Dorsolateral prefrontal cortex (tissue), 120 donors: ENCODE measurements at regions of chr17 and their contacts with region 1.

Region 1: GRCh38 chr17:76709077-76709950 is 1.5 kb downstream of the MXRA7 start:
- DNase-seq: peak in 5 of 10 donors; percentile 30 to 66 (median 59)
- H3K4me3 ChIP-seq: peak overlapping the region; percentile 50 to 81 (median 69)
- H3K27ac ChIP-seq: peak overlapping the region; percentile 43 to 92 (median 86)
- H3K27me3 ChIP-seq: no peaks in the 10 kb centered on the region
- CTCF ChIP-seq: no peak

Region 2: GRCh38 chr17:76671123-76671911 is 38.0 kb before region 1 on chr17:
- intact Hi-C with region 1: loop called in 1 of 2 experiments (anchors 5 kb)
- DNase-seq: peak; percentile 100
- H3K4me3 ChIP-seq: peak overlapping the region; percentile 34 to 96 (median 75)
- H3K27ac ChIP-seq: peak overlapping the region; percentile 16 to 97 (median 90)
- H3K27me3 ChIP-seq: no peaks in the 10 kb centered on the region
- CTCF ChIP-seq: peak in 10 of 56 donors; percentile 3 to 34 (median 14)

Region 3: GRCh38 chr17:76791053-76791980 is 82.0 kb after region 1 on chr17:
- intact Hi-C with region 1: no loop called
- DNase-seq: peak in 6 of 10 donors; percentile 7 to 52 (median 41)
- H3K4me3 ChIP-seq: peak overlapping the region in 19 of 59 donors; percentile 0 to 37 (median 20)
- H3K27ac ChIP-seq: peak overlapping the region in 50 of 59 donors; percentile 5 to 84 (median 66)
- H3K27me3 ChIP-seq: no peaks in the 10 kb centered on the region
- CTCF ChIP-seq: no peak